Activated naive CD4-positive, alpha-beta T cell treated with anti-CD3 and anti-CD28 coated beads, Interleukin-2, amount 10 ng/mL, durations not matched to agents 7 days and 5 days (primary cell): ENCODE measurements at regions of chr5 and their contacts with region 1.

Region 1: DNA sequence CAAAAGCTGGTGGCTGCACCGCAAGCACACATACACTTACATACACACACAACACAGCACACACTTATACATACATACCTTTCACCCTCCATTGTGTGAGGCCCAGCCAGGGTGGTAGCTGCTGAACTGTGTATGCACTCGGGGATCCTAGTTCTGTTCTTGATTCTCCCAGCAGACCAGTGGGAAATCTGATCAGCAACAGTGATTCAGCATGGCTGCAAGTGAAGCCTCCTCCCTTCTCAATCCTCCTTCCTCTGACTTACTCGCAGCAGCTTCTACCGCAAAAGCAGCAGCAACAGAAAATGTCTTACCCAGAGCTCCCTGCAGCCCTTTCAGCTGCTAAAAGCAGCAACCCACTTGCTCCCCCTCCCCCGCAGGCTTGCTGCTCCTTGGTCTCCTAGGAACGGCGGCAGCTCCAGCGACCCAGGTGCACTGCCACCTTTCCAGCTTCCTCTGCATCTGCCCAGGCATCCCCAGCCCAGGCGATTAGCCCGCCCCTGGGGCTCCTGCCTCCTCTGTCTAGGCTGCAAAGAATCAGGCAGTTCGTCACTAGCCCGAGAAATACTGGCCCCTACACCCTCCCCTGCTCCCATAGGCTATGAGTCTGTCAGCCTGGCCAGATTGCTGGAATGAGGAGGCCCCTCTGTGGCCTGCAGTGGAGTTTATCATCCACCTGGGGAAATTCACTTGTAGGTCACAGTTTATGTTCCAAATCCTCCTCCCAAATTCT is at the start of gene KLHL3:
- DNase-seq: peak; percentile 67
- H3K4me3 Mint-ChIP-seq: no peak within 1 kb of the TSS
- H3K27ac Mint-ChIP-seq: no peak within 1 kb of the TSS
- H3K4me1 Mint-ChIP-seq: peaks cover 56% of the 10 kb centered on the region
- H3K27me3 Mint-ChIP-seq: peaks cover 3% of the 10 kb centered on the region

Region 2: DNA sequence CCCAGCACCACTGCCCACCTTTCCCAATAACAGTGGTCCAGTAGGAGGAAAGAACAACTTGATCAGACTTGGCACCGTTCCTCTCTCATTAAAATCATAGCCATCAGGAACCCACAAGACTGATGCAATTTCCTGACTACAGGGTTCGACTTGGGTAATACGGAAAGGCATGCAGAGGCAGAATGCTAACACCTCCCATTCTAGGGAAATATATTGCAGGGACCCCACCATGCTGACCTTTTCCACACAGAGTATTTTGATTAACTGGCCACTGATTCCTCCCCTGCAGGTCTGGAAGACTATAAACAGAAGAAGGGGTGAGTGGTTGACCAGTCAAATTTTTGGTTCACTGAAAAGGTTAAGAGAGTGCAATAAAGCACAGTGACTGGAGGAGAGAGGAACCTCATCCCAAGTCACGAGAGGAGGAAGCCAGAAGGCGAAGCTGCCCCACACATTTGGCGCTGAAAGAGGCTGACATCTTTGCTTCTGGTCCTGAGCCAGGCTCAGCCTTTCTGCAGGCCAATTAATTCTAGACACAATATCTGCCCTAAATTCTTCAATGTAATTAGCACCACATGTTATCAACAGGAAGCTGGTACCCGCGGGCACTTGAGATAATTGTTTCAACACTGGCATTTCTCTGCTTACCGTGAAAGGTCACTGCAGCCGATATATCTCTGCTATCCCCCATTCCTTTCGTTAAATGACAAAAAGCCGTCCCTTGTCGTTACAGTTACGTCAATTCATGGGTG is 171.9 kb before region 1 on chr5:
- CTCF ChIA-PET with region 1: no interaction called
- DNase-seq: no peak
- H3K4me3 Mint-ChIP-seq: no peak overlapping the region
- H3K27ac Mint-ChIP-seq: no peak overlapping the region
- H3K4me1 Mint-ChIP-seq: peaks cover 2% of the 10 kb centered on the region
- H3K27me3 Mint-ChIP-seq: peaks cover 23% of the 10 kb centered on the region

Region 3: GRCh38 chr5:137695651-137696428 is 39.9 kb before region 1 on chr5:
- CTCF ChIA-PET with region 1: interaction called, 39 read pairs
- DNase-seq: peak; percentile 62
- H3K4me3 Mint-ChIP-seq: peak overlapping the region; percentile 16
- H3K27ac Mint-ChIP-seq: peak overlapping the region; percentile 94
- H3K4me1 Mint-ChIP-seq: peaks cover 57% of the 10 kb centered on the region
- H3K27me3 Mint-ChIP-seq: no peaks in the 10 kb centered on the region

Region 4: DNA sequence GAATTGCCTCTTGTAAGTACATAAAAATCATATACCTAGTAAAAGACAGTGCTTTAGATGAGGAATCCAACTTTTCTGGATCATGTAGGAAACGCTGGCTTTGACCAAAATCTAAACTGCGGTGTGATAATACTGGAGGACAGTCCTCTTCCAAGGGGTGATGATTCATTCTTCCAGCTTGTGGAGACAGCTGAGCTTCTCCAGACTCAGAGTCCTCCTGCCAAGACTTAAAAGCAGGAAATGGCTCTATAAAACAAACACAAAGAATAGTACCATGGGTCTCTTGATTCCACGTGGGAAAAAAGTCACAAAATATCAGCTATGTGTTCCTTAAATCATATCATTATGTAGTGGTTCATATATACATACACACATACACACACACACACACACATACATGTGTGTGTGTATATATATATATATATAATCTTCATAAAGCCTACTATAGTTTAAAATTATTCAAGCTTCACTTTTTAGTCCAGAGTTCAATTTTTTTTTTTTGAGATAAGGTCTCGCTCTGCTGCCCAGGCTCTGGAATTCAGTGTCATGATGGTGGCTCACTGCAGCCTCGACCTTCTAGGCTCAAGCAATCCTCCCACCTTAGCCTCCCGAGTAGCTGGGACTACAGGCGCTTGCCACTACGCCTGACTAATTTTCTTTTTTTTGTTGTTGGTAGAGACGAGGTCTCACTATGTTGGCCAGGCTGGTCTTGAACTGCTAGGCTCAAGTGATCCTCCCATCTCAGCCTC is 218.6 kb after region 1 on chr5:
- CTCF ChIA-PET with region 1: no interaction called
- DNase-seq: no peak
- H3K4me3 Mint-ChIP-seq: no peak overlapping the region
- H3K27ac Mint-ChIP-seq: peak overlapping the region; percentile 49
- H3K4me1 Mint-ChIP-seq: no peaks in the 10 kb centered on the region
- H3K27me3 Mint-ChIP-seq: no peaks in the 10 kb centered on the region